Activated CD4-positive, alpha-beta T cell treated with anti-CD3 and anti-CD28 coated beads, Interleukin-2, amount 10 ng/mL, durations not matched to agents 7 days and 5 days (primary cell): ENCODE measurements at regions of chr5 and their contacts with region 1.

Region 1: GRCh38 chr5:40410231-40410861 is 269.4 kb upstream of the PTGER4 start:
- DNase-seq: peak; percentile 81
- H3K4me3 Mint-ChIP-seq: peak overlapping the region; percentile 67
- H3K27ac Mint-ChIP-seq: peak overlapping the region; percentile 94
- H3K4me1 Mint-ChIP-seq: peaks cover 63% of the 10 kb centered on the region
- H3K27me3 Mint-ChIP-seq: no peaks in the 10 kb centered on the region

Region 2: DNA sequence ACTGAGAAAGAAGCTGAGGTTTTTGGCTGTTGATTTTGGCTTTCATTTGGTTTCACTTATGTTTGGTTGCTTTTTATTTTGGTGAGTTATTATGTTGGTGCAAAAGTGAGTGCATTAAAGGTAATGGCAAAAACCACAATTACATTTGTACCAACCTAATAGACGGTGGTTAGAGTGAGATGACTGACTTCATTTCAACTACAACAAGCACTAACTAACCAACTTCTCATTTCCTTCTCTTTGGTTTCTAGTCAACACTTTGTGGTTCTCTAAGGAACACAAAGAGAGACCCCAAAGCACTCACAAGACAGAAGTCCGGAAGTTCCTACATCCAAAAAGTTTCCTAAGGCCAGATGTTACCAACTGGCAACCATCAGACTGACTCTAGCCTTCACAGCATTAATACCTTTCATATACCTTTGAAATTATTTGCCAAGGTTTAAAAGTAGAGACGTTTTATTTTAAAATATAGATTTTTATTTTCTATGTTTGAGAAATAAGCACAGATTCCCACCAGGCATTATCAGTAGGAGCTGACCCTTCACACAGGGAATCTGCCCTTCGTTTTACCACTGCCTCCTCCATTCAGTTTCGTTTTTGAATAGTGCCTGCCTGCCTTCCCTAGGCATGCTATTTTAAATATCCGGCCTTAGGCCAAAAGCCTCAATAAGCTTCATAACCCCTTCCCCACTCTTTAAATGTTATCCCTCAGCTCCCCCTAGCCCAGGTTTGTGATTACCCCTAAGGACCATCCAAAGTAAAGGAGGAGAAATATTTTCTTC is 31.8 kb before region 1 on chr5:
- CTCF ChIA-PET with region 1: no interaction called
- POLR2A ChIA-PET with region 1: no interaction called
- DNase-seq: no peak
- H3K4me3 Mint-ChIP-seq: peak overlapping the region; percentile 31
- H3K27ac Mint-ChIP-seq: peak overlapping the region; percentile 82
- H3K4me1 Mint-ChIP-seq: peaks cover 45% of the 10 kb centered on the region
- H3K27me3 Mint-ChIP-seq: no peaks in the 10 kb centered on the region

Region 3: DNA sequence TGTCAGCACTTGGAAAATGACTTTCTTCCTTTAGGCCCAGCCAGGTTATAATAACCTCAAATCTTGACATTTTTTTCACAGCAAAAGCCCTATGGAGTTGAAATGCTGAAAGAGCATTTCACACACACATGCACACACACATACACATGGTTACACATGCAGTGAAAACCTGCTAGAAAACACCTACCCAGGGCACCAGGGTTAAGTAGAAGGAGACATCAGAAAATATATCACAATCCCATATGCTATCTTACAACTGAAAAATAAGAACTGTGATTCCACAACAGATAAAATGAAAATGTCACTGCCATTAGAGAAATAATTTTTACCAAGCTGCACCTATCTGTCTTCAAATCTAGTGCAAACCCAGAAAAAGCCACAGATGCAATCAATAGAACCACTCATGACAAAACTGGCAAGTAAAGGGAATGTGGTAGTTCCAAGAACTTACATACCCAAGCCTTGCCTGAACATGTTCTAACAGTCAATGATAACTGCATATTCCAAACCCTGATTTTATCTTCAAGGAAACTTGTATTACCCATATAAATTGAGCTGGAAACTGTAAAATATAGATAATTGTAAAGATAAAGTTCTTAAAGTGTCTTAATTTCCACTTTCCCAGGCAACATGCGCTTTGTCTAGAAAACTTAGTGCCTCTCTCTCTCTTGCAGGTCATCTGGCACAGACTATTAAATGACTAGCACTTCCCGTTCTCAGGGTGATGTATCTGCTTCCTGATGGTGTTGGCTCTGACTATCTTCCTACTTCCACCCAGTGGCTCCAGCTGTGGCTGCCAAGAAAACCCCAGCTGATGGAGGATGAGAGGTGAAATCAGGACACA is 19.1 kb after region 1 on chr5:
- CTCF ChIA-PET with region 1: interaction called, 12 read pairs
- POLR2A ChIA-PET with region 1: no interaction called
- DNase-seq: no peak
- H3K4me3 Mint-ChIP-seq: peak overlapping the region; percentile 4
- H3K27ac Mint-ChIP-seq: peak overlapping the region; percentile 83
- H3K4me1 Mint-ChIP-seq: peaks cover 43% of the 10 kb centered on the region
- H3K27me3 Mint-ChIP-seq: no peaks in the 10 kb centered on the region

Region 4: GRCh38 chr5:40446910-40447309 is 36.6 kb after region 1 on chr5:
- CTCF ChIA-PET with region 1: no interaction called
- POLR2A ChIA-PET with region 1: no interaction called
- DNase-seq: no peak
- H3K4me3 Mint-ChIP-seq: no peak overlapping the region
- H3K27ac Mint-ChIP-seq: no peak overlapping the region
- H3K4me1 Mint-ChIP-seq: peaks cover 13% of the 10 kb centered on the region
- H3K27me3 Mint-ChIP-seq: no peaks in the 10 kb centered on the region

Region 5: DNA sequence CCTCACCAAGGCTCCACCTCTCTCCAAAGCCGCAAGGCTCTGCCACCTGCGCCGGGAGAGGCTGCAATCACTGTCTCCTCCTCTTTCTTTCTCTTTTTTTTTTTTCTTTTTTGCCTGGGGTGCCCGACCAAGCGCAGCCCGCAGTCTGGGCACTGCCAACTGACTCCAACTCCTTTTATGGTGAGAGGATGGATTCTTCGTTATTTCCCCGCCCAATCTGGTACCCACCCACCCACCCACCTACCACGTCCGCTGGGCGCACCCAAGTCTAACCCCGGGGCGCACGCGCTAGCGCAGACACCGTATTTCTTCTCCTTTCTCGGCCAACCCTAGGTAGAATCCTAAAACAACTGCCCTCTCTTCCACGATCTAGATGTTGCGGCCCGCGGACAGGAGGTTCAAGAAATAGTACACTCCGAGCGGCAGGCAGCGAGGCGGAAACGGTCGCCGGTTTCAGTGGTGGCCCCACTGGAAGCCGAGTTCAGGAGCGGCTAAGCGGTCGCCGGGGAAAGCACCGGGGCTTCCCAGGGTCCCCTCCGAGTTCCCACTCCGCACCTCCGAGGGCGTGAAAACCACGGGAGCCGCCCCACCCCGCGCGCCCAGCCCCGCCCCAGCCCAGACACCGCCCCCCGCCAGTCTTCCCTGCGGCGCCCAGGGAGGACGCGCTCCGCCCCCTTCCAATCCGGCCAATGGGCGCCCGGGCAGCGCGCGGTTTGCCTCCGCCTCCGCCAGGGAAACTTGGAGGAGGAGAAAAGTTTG is 269.0 kb after region 1 on chr5:
- CTCF ChIA-PET with region 1: interaction called, 13 read pairs
- POLR2A ChIA-PET with region 1: interaction called, 5 read pairs
- DNase-seq: peak; percentile 92
- H3K4me3 Mint-ChIP-seq: peak overlapping the region; percentile 92
- H3K27ac Mint-ChIP-seq: peak overlapping the region; percentile 95
- H3K4me1 Mint-ChIP-seq: peaks cover 49% of the 10 kb centered on the region
- H3K27me3 Mint-ChIP-seq: no peaks in the 10 kb centered on the region